ENCODE measurements at regions of chr7 and their contacts with region 1.

Region 1: GRCh38 chr7:149147072-149147751 is at the start of gene ZNF398:
- DNase-seq: peak; percentile 70 to 94 (median 79)
- ATAC-seq: peak; percentile 70
- H3K4me3 ChIP-seq: peak within 1 kb of the TSS; percentile 89
- H3K4me3 Mint-ChIP-seq: peak within 1 kb of the TSS; percentile 89
- H3K27ac ChIP-seq: peak within 1 kb of the TSS; percentile 84 to 85
- H3K27ac Mint-ChIP-seq: peak within 1 kb of the TSS; percentile 85
- H3K4me1 ChIP-seq: peaks cover 48% of the 10 kb centered on the region
- H3K4me1 Mint-ChIP-seq: peaks cover 47% of the 10 kb centered on the region
- H3K27me3 ChIP-seq: no peaks in the 10 kb centered on the region
- H3K27me3 Mint-ChIP-seq: no peaks in the 10 kb centered on the region
- CTCF ChIP-seq: peak; percentile 38
- total RNA-seq, gene ZNF398: 14.0 to 15.0 TPM

Region 2: GRCh38 chr7:149090397-149091195 is 56.6 kb before region 1 on chr7 and contains the start of gene ZNF786:
- CTCF ChIA-PET with region 1: interaction called, 5 read pairs
- POLR2A ChIA-PET with region 1: interaction called, 7 read pairs
- intact Hi-C with region 1: loop called (anchors 1 kb)
- DNase-seq: peak; percentile 81 to 97 (median 90)
- ATAC-seq: peak; percentile 82
- H3K4me3 ChIP-seq: peak within 1 kb of the TSS; percentile 72
- H3K4me3 Mint-ChIP-seq: peak within 1 kb of the TSS; percentile 100
- H3K27ac ChIP-seq: peak within 1 kb of the TSS; percentile 82 to 90
- H3K27ac Mint-ChIP-seq: peak within 1 kb of the TSS; percentile 93
- H3K4me1 ChIP-seq: peaks cover 27% of the 10 kb centered on the region
- H3K4me1 Mint-ChIP-seq: peaks cover 26% of the 10 kb centered on the region
- H3K27me3 ChIP-seq: no peaks in the 10 kb centered on the region
- H3K27me3 Mint-ChIP-seq: no peaks in the 10 kb centered on the region
- CTCF ChIP-seq: peak; percentile 87
- total RNA-seq, gene ZNF786: 2.7 to 3.5 TPM

Region 3: DNA sequence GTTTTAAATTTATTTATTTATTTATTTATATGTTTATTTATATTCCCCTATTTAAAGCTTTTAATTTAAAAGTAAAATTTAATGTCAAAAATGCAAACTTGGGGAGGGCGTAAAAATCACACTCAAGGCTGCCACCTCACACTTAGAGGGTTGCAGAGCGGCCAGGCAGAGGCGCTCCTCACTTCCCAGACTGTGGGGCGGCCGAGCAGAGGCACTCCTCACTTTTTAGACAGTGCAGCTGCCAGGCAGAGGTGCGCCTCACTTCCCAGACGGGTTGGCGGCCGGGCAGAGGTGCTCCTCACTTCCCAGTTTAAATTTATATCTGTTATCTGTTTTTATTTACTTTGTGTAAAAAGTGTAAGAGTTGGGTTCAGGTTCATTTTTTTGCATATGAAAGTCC is 11.1 kb before region 1 on chr7:
- CTCF ChIA-PET with region 1: interaction called, 10 read pairs
- POLR2A ChIA-PET with region 1: interaction called, 6 read pairs
- intact Hi-C with region 1: no loop called
- DNase-seq: no peak
- ATAC-seq: no peak
- H3K4me3 ChIP-seq: no peak overlapping the region
- H3K4me3 Mint-ChIP-seq: no peak overlapping the region
- H3K27ac ChIP-seq: no peak overlapping the region
- H3K27ac Mint-ChIP-seq: no peak overlapping the region
- H3K4me1 ChIP-seq: no peaks in the 10 kb centered on the region
- H3K4me1 Mint-ChIP-seq: no peaks in the 10 kb centered on the region
- H3K27me3 ChIP-seq: no peaks in the 10 kb centered on the region
- H3K27me3 Mint-ChIP-seq: no peaks in the 10 kb centered on the region
- CTCF ChIP-seq: no peak

Region 4: DNA sequence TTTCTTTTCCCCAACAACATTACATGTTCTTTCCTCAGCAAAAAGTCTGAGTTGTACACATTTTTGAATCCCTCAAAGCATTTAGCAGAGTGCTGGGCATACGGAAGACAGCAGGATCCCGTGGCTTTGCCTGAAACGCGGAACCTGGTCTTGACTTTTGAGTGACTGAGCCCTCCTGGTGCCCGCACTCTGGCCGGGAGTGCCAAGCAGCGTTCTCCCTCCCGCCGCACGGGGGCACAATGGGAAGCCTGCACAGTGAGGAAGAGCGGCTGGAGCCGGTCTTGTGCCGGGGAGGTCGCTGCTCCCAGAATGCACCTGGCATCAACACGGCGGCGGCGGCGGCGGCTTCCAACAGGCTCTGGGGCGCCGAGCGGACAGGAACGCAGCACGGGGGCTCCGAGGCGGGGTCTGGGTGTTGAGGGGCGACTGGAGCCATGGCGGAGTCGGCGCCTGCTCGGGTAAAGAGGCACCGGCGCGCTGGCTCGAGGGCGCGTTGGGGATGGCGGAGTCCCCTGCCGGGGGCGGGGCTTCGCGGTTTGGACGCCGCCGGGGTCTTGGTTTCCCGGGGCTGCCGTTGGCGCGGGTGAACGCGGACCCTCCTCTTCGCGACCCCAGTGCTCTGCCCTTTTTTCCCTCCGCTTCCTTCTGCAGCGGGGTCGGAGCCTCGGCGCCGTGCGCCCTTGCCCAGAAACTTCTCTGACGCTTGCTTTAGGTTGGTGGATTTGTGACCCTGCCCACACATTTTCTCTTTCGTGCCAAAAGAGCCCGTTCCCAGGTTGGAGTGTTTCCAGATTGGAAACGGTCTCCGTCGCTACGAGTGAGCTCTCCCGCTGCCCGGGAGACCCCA is 92.4 kb after region 1 on chr7 and contains the start of gene ZNF212:
- CTCF ChIA-PET with region 1: interaction called, 5 read pairs
- POLR2A ChIA-PET with region 1: no interaction called
- intact Hi-C with region 1: loop called in 1 of 2 experiments (anchors 1 kb)
- DNase-seq: peak; percentile 78 to 93 (median 86)
- ATAC-seq: peak; percentile 100
- H3K4me3 ChIP-seq: peak within 1 kb of the TSS; percentile 84
- H3K4me3 Mint-ChIP-seq: peak within 1 kb of the TSS; percentile 93
- H3K27ac ChIP-seq: peak within 1 kb of the TSS in 1 of 2 donors; percentile 72
- H3K27ac Mint-ChIP-seq: peak within 1 kb of the TSS; percentile 81
- H3K4me1 ChIP-seq: peaks cover 30% of the 10 kb centered on the region
- H3K4me1 Mint-ChIP-seq: peaks cover 27% of the 10 kb centered on the region
- H3K27me3 ChIP-seq: no peaks in the 10 kb centered on the region
- H3K27me3 Mint-ChIP-seq: peaks cover 10% of the 10 kb centered on the region
- CTCF ChIP-seq: peak; percentile 86
- total RNA-seq, gene ZNF212: 12.1 to 13.2 TPM

Region 5: DNA sequence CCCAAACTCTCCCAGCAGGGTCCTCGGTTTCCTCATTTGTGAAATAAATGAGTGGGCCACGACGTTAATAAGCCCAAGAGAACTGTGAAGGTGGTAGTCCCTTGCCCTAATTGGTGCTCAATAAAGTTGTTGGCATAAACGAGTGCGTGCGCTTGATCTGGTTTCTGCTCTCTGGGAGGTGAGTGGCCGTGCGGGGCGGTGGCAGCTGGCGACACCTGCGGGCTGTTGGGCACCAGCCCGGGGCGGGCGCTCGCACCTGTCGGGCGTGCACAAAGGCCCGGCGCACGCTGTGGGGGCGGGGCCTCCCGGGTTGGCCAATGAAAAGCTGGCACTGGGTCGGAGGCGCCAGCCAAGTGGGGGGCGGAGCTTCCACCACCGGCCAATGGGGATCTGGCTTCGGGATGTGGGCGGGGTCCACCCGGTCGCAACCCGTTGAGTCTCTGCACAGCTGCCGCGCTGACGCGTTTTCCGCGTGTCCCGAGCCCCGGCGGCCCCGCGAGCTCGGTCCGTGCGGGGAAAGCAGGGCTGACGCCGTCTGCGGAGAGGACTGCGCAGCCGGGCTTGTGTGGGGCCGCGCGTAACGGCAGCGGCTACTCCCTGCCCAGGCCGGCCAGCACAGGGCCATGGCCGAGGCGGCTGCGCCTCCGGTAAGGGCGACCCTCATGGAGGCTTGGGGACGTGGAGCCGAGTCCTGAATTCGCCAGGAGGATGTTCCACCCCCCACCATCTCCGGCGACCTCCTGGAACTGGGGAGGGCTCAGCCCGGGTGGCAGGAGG is 137.8 kb after region 1 on chr7:
- CTCF ChIA-PET with region 1: interaction called, 8 read pairs
- POLR2A ChIA-PET with region 1: interaction called, 19 read pairs
- intact Hi-C with region 1: no loop called
- DNase-seq: peak; percentile 96 to 99 (median 98)
- ATAC-seq: peak; percentile 93
- H3K4me3 ChIP-seq: peak overlapping the region; percentile 65
- H3K4me3 Mint-ChIP-seq: peak overlapping the region; percentile 92
- H3K27ac ChIP-seq: peak overlapping the region; percentile 21 to 63
- H3K27ac Mint-ChIP-seq: peak overlapping the region; percentile 90
- H3K4me1 ChIP-seq: peaks cover 47% of the 10 kb centered on the region
- H3K4me1 Mint-ChIP-seq: peaks cover 44% of the 10 kb centered on the region
- H3K27me3 ChIP-seq: no peaks in the 10 kb centered on the region
- H3K27me3 Mint-ChIP-seq: no peaks in the 10 kb centered on the region
- CTCF ChIP-seq: peak; percentile 13

Region 6: GRCh38 chr7:149624419-149625339 is 477.5 kb after region 1 on chr7:
- CTCF ChIA-PET with region 1: no interaction called
- POLR2A ChIA-PET with region 1: no interaction called
- intact Hi-C with region 1: loop called in 1 of 2 experiments (anchors 5 kb)
- DNase-seq: peak; percentile 79 to 97 (median 88)
- ATAC-seq: peak; percentile 88
- H3K4me3 ChIP-seq: peak overlapping the region; percentile 83
- H3K4me3 Mint-ChIP-seq: peak overlapping the region; percentile 98
- H3K27ac ChIP-seq: peak overlapping the region in 1 of 2 donors; percentile 41
- H3K27ac Mint-ChIP-seq: peak overlapping the region; percentile 70
- H3K4me1 ChIP-seq: peaks cover 47% of the 10 kb centered on the region
- H3K4me1 Mint-ChIP-seq: peaks cover 40% of the 10 kb centered on the region
- H3K27me3 ChIP-seq: no peaks in the 10 kb centered on the region
- H3K27me3 Mint-ChIP-seq: peaks cover 3% of the 10 kb centered on the region
- CTCF ChIP-seq: peak; percentile 88

Measured in CD4-positive, alpha-beta T cell (primary cell).